CD8-positive, alpha-beta T cell (primary cell): ENCODE measurements at regions of chr21 and their contacts with region 1.

Region 1: GRCh38 chr21:32958288-32959002 is 67.3 kb upstream of the OLIG2 start:
- DNase-seq: no peak
- ATAC-seq: no peak
- H3K4me3 ChIP-seq: no peak overlapping the region
- H3K4me3 Mint-ChIP-seq: no peak overlapping the region
- H3K27ac ChIP-seq: no peak overlapping the region
- H3K27ac Mint-ChIP-seq: no peak overlapping the region
- H3K4me1 ChIP-seq: no peaks in the 10 kb centered on the region
- H3K4me1 Mint-ChIP-seq: no peaks in the 10 kb centered on the region
- H3K27me3 ChIP-seq: peaks cover 0 to 2% of the 10 kb centered on the region in 2 experiments
- H3K27me3 Mint-ChIP-seq: peaks cover 47% of the 10 kb centered on the region
- CTCF ChIP-seq: no peak

Region 2: GRCh38 chr21:32844653-32845436 is 113.6 kb before region 1 on chr21:
- CTCF ChIA-PET with region 1: no interaction called
- POLR2A ChIA-PET with region 1: no interaction called
- intact Hi-C with region 1: loop called in 1 of 2 experiments (anchors 10 kb)
- DNase-seq: no peak
- ATAC-seq: no peak
- H3K4me3 ChIP-seq: no peak overlapping the region
- H3K4me3 Mint-ChIP-seq: no peak overlapping the region
- H3K27ac ChIP-seq: no peak overlapping the region
- H3K27ac Mint-ChIP-seq: no peak overlapping the region
- H3K4me1 ChIP-seq: no peaks in the 10 kb centered on the region
- H3K4me1 Mint-ChIP-seq: no peaks in the 10 kb centered on the region
- H3K27me3 ChIP-seq: no peaks in the 10 kb centered on the region
- H3K27me3 Mint-ChIP-seq: peaks cover 7% of the 10 kb centered on the region
- CTCF ChIP-seq: no peak